ENCODE measurements at regions of chr7 and their contacts with region 1.

Region 1: DNA sequence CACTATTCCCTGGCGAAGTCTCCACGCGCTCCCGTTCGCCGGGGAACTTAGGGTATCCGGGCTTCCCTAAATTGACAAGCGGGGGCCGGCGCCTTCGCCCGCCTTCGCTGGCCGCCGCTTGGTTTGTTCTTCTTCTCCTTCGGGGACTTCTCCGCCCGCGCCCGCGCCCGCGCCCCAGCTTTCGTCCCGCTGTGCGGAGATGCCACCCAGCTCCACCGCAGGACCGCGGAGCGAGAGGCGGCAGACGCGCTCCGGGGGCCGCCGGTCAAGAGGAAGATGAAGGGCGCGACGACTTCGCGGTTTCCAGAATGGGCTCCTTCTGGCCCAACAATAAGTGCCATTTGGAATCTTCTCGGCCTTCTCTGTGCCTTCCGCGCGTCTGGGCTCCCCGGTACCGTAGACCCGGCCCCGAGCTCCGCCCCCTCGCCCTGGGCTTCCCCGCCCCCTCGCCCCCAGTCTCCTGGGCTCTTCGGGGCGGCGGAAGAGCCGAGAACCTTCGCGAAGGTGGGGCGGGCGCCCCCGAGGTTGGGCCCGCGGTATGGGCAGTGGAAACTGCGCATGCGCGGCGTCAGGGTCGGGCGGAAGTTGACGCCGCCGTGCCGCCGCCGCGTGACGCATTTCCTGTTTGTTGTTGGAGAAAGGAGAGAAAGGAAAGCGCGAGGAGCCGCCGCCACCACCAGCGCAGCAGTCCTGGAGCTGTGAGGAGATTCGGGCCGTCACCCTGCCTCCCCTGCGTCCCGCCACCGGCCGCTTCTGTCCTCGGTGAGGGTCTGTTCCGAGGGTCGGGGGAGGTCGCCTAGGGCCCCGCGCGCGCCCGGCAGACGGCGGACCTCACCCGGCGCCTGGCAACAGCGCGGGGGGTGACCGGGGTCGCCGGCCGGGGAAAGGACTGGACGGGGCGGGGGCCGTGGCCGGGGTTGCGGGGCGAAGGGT is at the start of gene DNAJB6:
- DNase-seq: peak; percentile 97
- ATAC-seq: peak; percentile 75
- H3K4me3 Mint-ChIP-seq: peak within 1 kb of the TSS; percentile 90
- H3K27ac Mint-ChIP-seq: peak within 1 kb of the TSS; percentile 96
- H3K4me1 Mint-ChIP-seq: peaks cover 40% of the 10 kb centered on the region
- H3K27me3 Mint-ChIP-seq: no peaks in the 10 kb centered on the region
- total RNA-seq, gene DNAJB6: 89.9 to 92.9 TPM

Region 2: GRCh38 chr7:156640257-156640948 is 696.2 kb before region 1 on chr7 and contains the start of gene RNF32:
- CTCF ChIA-PET with region 1: no interaction called
- POLR2A ChIA-PET with region 1: no interaction called
- intact Hi-C with region 1: loop called in 1 of 2 experiments (anchors 2 kb)
- DNase-seq: peak; percentile 100
- ATAC-seq: peak; percentile 90
- H3K4me3 Mint-ChIP-seq: peak within 1 kb of the TSS; percentile 76
- H3K27ac Mint-ChIP-seq: peak within 1 kb of the TSS; percentile 87
- H3K4me1 Mint-ChIP-seq: peaks cover 15% of the 10 kb centered on the region
- H3K27me3 Mint-ChIP-seq: peaks cover 29% of the 10 kb centered on the region
- total RNA-seq, gene RNF32: 0.71 to 0.90 TPM

Region 3: GRCh38 chr7:157273208-157274093 is 63.2 kb before region 1 on chr7:
- CTCF ChIA-PET with region 1: interaction called, 4 read pairs
- POLR2A ChIA-PET with region 1: no interaction called
- intact Hi-C with region 1: loop called in 1 of 2 experiments (anchors 2 kb)
- DNase-seq: peak; percentile 81
- ATAC-seq: peak; percentile 84
- H3K4me3 Mint-ChIP-seq: no peak overlapping the region
- H3K27ac Mint-ChIP-seq: no peak overlapping the region
- H3K4me1 Mint-ChIP-seq: peaks cover 18% of the 10 kb centered on the region
- H3K27me3 Mint-ChIP-seq: peaks cover 2% of the 10 kb centered on the region

Region 4: DNA sequence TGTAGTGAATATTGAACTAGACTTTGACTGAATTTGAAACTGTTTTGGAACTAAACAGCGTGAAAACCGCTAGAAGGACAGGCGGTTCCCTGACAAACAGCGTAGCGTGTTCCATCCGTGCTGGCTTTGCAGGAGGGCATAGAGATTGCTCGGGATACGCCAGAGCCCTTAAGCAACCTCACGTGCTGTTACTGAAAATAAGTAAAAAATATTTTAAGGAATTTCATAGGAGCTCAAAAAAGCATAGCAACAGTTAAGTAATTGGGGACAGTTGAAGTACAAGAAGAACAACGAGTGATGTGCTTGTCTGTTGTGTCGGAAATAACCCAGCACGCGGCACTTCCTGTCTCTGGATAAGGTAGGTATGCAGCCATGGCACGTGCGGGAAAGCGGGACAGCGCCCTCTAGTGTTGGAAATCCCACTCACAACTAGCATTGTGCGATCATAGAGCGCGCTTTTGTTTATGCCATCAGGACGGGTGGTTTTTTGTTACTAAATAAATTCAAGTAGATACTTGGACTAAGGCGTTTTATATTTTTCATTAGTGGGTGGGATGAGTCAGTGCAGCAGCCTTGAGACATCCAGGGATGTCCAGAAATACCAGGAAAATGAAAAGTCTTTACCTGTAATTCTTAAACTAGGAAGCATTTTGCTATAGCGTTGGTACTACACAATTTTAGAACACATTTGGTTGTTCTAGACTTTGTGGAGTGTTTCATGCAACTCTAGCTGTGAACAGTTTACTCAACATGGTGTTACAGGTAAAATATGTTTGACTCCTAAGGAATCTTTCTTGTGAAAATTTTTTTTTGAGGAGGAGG is 50.5 kb after region 1 on chr7:
- CTCF ChIA-PET with region 1: interaction called, 13 read pairs
- POLR2A ChIA-PET with region 1: no interaction called
- intact Hi-C with region 1: loop called in 1 of 2 experiments (anchors 5 kb)
- DNase-seq: peak; percentile 95
- ATAC-seq: peak; percentile 96
- H3K4me3 Mint-ChIP-seq: no peak overlapping the region
- H3K27ac Mint-ChIP-seq: peak overlapping the region; percentile 75
- H3K4me1 Mint-ChIP-seq: peaks cover 36% of the 10 kb centered on the region
- H3K27me3 Mint-ChIP-seq: no peaks in the 10 kb centered on the region